Activated B cell treated with CpG ODN at 0.5 μM for 24 hours (primary cell): ENCODE measurements at regions of chr11 and their contacts with region 1.

Region 1: DNA sequence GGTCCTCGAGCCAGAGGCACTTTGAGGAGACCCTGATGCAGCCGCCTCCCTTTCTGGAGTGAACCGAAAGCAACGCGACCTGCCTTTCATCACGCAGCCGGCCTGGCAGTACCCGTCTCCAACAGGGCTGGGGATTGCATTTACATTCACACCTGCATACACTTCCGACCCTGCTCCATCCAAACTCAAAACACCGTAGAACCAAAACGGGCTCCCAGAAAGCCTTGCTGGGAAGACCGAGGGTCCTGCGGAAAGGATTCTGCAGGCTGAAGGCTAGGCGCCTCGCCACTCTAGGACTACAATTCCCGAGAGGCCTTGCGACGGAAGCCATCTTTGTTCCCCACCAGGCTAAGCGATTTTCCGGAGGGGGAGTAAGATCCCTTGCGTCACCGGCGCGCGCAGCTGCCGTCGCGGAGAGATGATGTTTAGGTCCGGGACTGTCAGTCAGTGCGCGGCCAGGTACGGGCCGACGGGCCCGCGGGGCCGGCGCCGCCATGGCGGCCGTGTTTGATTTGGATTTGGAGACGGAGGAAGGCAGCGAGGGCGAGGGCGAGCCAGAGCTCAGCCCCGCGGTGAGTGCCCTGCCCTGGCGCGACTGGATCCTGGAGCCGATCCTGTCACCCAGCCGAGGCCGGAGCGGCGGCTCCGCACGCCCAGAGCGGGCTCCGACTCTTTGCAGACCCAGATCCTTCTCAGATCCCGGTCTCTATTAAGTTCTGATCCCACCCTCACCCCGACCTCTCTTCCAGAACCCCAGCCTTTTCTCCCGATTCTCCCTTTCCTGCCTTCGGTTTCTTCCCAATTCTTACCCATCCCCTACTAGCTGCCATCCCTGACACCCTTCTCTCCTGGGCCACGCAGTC is at the start of gene RPS6KB2:
- DNase-seq: peak; percentile 99
- ATAC-seq: peak; percentile 81
- H3K4me3 Mint-ChIP-seq: peak within 1 kb of the TSS; percentile 98
- H3K27ac Mint-ChIP-seq: peak within 1 kb of the TSS; percentile 93
- H3K4me1 Mint-ChIP-seq: peaks cover 41% of the 10 kb centered on the region
- H3K27me3 Mint-ChIP-seq: no peaks in the 10 kb centered on the region
- CTCF ChIP-seq: no peak
- total RNA-seq, gene RPS6KB2: 66.9 and 74.5 TPM in 2 replicates

Region 2: GRCh38 chr11:67409261-67409666 is 19.0 kb before region 1 on chr11:
- CTCF ChIA-PET with region 1: no interaction called
- POLR2A ChIA-PET with region 1: interaction called, 693 read pairs
- intact Hi-C with region 1: loop called (anchors 1 kb)
- DNase-seq: peak; percentile 61
- ATAC-seq: peak; percentile 63
- H3K4me3 Mint-ChIP-seq: peak overlapping the region; percentile 80
- H3K27ac Mint-ChIP-seq: peak overlapping the region; percentile 95
- H3K4me1 Mint-ChIP-seq: peaks cover 93% of the 10 kb centered on the region
- H3K27me3 Mint-ChIP-seq: no peaks in the 10 kb centered on the region
- CTCF ChIP-seq: no peak

Region 3: DNA sequence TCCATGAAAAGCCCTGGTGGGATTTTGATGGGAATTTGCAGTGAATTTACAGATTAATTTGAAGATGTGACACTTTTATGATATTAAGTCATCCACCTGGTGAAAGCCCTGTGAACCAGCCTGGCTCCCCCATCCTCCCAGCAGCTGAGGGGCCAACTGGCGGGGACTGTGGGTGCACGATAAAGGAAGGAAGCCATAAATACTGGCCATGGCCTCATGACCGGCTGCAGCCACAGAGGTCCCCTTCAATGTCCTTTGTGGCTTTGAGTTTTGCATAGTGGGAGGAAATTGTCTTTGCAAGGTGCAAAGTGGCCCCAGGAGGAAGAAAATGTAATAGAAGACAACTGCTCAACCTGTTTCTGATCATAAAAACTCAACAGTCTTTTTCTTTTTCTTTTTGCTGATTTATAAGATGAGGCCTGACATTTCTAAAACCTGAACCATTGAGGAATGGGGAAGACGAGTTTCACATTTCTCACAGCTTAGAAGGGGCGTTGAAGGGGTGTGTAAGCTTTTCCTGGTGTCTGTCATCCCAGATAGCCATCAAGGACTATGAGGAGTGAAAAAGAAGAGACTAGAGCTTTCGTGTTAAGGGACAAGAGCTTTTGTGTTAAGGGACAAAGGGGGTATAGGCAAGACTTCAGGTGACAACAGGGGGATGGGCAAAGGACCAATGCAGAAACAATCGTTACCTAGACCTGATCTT is 172.2 kb after region 1 on chr11:
- CTCF ChIA-PET with region 1: no interaction called
- POLR2A ChIA-PET with region 1: no interaction called
- intact Hi-C with region 1: no loop called
- DNase-seq: no peak
- ATAC-seq: peak; percentile 56
- H3K4me3 Mint-ChIP-seq: no peak overlapping the region
- H3K27ac Mint-ChIP-seq: no peak overlapping the region
- H3K4me1 Mint-ChIP-seq: peaks cover 20% of the 10 kb centered on the region
- H3K27me3 Mint-ChIP-seq: peaks cover 8% of the 10 kb centered on the region
- CTCF ChIP-seq: no peak